Activated naive CD4-positive, alpha-beta T cell treated with anti-CD3 and anti-CD28 coated beads for 36 hours (primary cell): ENCODE measurements at regions of chr2 and their contacts with region 1.

Region 1: DNA sequence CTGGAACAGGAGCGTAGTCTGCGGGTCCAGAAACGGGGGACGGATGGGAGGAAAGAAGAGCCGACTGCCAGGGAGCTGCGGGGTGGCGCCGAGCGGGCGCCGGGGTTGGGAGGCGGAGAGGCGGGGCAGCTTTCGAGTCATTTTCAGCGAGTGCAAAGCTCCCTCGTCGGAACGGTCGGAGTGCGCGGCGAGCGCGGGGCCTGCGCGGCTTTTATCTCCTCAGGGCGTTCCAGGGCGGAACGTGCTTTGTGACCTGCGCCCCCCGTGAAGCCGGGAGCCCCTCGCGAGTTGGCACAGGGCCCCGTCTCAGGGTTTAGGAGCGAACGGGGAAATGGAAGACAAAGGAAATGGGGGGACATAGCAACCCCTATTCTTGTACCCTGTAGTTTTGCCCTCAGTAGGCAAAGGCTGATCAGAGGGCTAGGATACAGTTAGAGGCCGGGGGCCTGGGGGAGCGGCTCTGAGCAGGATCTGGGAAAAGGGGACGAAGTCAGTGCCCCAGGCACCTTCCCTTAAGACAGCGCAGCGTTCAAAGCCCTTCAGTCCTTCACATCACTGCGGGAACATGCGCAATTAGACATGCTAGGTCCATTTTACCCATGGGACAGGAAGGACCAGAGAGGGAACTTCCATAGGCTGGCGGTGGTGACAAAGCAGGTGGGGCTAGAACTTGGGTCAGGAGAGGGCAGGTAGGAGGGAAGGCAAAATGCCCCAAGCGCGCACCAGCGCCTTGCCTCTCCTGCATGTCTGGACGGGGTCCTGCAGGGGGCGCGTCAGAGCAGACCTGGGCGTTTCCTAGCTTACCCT is 60.1 kb upstream of the IL1RL1 start:
- DNase-seq: peak; percentile 82
- H3K4me3 Mint-ChIP-seq: peak overlapping the region; percentile 77
- H3K27ac Mint-ChIP-seq: peak overlapping the region; percentile 69
- H3K4me1 Mint-ChIP-seq: peaks cover 37% of the 10 kb centered on the region
- H3K27me3 Mint-ChIP-seq: peaks cover 3% of the 10 kb centered on the region

Region 2: DNA sequence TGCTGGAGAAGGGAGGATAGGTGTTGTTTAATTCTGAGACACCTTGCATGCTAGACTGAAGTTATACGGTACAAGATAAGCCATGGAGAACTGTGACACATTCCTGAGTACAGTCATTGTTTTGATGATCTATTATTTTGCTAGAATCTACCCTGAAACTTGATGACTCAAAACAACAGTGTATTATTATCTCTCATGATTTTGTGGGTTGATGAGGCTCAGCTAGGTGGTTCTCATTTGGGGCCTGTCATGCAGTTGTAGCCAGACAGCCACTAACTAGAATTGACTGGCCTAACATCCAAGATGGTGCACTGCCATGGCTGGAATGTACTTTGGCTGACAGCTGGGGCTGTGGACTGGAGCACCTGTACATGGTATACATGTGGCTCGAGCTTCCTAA is 114.1 kb before region 1 on chr2:
- CTCF ChIA-PET with region 1: interaction called, 3 read pairs
- intact Hi-C with region 1: loop called (anchors 1 kb)
- DNase-seq: peak; percentile 72
- H3K4me3 Mint-ChIP-seq: no peak overlapping the region
- H3K27ac Mint-ChIP-seq: peak overlapping the region; percentile 62
- H3K4me1 Mint-ChIP-seq: peaks cover 39% of the 10 kb centered on the region
- H3K27me3 Mint-ChIP-seq: peaks cover 26% of the 10 kb centered on the region

Region 3: GRCh38 chr2:102301867-102302362 is 50.7 kb after region 1 on chr2:
- CTCF ChIA-PET with region 1: interaction called, 3 read pairs
- intact Hi-C with region 1: loop called (anchors 1 kb)
- DNase-seq: peak; percentile 76
- H3K4me3 Mint-ChIP-seq: no peak overlapping the region
- H3K27ac Mint-ChIP-seq: no peak overlapping the region
- H3K4me1 Mint-ChIP-seq: peaks cover 35% of the 10 kb centered on the region
- H3K27me3 Mint-ChIP-seq: no peaks in the 10 kb centered on the region

Region 4: DNA sequence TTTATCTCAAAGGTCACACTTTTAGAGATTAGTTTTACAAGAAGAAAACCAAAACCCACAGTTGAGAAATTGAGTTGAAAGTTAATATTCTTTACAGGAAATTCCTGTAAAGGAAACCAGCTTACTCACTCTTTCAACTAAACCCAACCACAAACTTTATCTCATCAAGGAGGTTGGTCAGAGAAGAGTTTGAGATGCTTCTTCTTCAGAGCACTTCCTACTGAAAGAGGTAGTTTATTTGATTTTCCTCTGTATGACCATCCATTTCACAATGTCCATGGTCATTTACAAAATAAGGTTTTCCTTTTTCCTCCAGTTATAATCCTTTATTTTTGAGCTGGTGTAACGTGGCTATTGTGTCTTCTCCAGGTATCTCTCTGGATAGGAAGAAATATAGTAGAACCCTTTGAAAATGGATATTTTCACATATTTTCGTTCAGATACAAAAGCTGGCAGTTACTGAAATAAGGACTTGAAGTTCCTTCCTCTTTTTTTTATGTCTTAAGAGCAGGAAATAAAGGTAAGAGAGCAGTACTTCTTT is 167.2 kb after region 1 on chr2:
- CTCF ChIA-PET with region 1: interaction called, 4 read pairs
- intact Hi-C with region 1: loop called (anchors 1 kb)
- DNase-seq: no peak
- H3K4me3 Mint-ChIP-seq: peak overlapping the region; percentile 75
- H3K27ac Mint-ChIP-seq: peak overlapping the region; percentile 92
- H3K4me1 Mint-ChIP-seq: peaks cover 57% of the 10 kb centered on the region
- H3K27me3 Mint-ChIP-seq: no peaks in the 10 kb centered on the region

Region 5: DNA sequence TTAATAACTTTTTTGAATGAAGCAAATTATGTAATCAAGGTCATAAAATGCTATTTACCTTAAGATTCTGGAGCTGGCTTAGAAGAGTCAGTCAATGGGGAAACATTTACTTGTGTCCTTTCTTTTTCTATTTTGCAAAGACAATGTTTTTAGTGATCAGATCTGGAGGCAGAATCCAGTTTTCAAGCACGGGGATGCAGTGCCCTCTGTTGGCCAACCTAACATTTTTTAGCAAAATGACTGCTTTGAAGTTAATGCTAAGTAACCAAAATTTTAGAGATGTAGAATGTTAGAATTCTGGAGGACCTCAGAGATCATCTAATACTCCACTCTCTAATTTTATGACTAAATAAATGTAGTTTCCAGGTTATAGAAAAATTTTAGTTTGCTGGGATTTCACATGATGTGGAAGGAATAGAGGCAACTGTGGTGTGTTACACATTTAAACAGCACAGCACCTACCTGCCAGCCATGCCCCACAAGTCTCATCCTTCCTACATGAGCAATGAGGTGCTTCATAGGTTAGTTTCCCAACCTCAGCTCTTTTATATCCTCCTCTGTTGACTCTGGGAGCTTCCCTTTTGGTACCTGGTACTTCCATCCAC is 198.2 kb after region 1 on chr2:
- CTCF ChIA-PET with region 1: interaction called, 21 read pairs
- intact Hi-C with region 1: loop called (anchors 1 kb)
- DNase-seq: peak; percentile 86
- H3K4me3 Mint-ChIP-seq: no peak overlapping the region
- H3K27ac Mint-ChIP-seq: no peak overlapping the region
- H3K4me1 Mint-ChIP-seq: peaks cover 2% of the 10 kb centered on the region
- H3K27me3 Mint-ChIP-seq: no peaks in the 10 kb centered on the region